ENCODE measurements at regions of chr9 and their contacts with region 1.

Region 1: GRCh38 chr9:123399803-123400378 is 43.9 kb downstream of the CRB2 start:
- DNase-seq: peak; percentile 61
- CTCF ChIP-seq: peak; percentile 28

Region 2: DNA sequence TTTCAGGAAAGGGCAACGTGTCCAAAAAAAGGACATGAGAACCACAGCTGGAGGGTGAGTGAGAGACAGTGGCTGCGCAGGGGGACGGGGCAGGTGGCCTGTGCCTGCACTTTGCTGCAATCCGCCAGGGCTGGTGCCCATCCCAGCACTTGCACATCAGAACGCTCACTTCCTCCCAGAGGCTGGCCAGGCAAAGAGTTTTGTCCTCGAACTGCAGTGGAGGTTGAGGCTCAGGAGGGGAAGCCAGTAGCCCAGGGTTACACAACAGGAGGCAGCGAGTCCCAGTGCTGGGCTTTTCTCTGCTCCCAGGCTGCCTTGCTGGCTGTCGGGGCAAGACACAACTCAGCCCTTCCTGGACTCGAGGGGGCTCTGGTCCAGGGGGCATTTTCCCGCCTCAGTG is 10.8 kb before region 1 on chr9:
- CTCF ChIA-PET with region 1: interaction called, 13 read pairs
- POLR2A ChIA-PET with region 1: no interaction called
- DNase-seq: no peak
- CTCF ChIP-seq: no peak